Endothelial cell of umbilical vein (primary cell): ENCODE measurements at regions of chr1 and their contacts with region 1.

Region 1: DNA sequence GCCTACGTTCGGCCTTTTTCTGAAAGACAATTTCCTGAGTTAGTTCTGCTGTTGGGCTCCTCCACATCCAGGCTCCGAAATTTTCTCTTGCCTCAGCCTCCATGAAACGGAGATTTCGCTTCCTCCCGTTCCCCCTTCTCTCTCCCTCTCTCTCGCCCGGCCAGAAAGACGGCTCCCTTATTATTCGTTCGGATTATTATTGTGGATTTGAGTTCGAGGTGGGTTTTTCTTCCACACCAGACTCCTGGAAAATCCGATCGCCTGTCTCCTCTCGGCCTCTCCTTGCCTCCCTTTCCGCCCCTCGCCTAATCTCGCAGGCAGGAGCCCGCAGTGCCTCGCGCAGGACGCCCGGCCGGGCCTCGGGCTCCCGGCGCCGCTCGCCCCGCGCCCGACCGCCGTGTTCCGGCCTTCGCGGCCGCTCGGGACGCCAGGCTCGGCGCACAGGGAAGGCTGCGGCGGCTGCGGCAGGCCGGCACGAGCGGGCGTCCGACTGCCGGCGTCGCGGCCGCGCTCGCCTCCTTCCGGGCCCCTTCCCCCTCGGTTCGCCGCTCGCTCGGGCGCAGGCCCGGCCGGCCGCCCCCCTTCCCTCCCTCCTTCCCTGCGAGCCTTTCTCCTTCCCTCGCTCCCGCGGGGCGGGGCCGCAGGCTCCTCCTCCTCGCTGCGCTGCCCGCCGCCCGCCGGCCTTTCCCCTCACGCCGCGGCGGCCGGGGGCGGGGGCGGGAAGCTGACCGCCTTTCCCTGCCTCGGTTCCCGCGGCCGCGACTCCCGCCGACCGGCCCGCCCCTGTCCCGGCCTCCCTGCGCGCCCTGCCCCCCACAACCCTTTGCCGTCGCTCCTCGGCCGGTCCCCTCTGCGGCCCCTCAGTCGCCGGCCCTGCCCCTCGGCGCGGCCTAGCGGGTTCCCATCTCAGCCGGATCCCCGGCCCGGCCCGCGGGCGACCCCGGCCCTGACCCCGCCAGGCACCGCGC is at the start of gene ARHGEF11:
- DNase-seq: peak; percentile 89
- H3K4me3 ChIP-seq: peak within 1 kb of the TSS; percentile 59 to 99 (median 86)
- H3K27ac ChIP-seq: peak within 1 kb of the TSS; percentile 90
- H3K4me1 ChIP-seq: peaks cover 32% of the 10 kb centered on the region
- H3K27me3 ChIP-seq: peaks cover 7 to 9% of the 10 kb centered on the region in 2 experiments
- CTCF ChIP-seq: no peak
- POLR2A ChIP-seq: peak; percentile 90
- total RNA-seq, gene ARHGEF11: 27.2 and 28.0 TPM in 2 replicates

Region 2: DNA sequence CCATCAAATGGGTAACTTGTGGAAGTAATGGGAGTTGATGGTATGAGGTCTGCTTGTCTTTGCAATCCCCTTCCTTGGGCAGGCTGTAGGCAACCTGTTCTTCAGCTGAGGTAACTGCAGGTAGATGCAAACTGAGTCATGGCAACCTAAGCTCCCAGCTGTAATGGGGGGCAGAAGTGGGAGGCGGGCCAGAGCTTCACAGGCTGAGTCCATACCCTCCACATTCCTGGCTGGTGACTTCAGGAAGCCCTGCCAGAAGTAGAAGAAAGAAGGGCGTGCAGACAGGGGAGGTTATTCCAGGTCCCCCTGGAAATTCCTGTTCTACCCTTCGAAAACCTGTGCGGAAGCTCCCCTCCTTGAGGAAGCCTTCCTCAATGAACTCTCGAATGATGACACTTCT is 44.8 kb before region 1 on chr1:
- CTCF ChIA-PET with region 1: no interaction called
- POLR2A ChIA-PET with region 1: no interaction called
- dilution Hi-C with region 1: no loop called
- intact Hi-C with region 1: loop called (anchors 5 kb)
- DNase-seq: peak; percentile 6
- H3K4me3 ChIP-seq: no peak overlapping the region
- H3K27ac ChIP-seq: no peak overlapping the region
- H3K4me1 ChIP-seq: peaks cover 20% of the 10 kb centered on the region
- H3K27me3 ChIP-seq: no peaks in the 10 kb centered on the region
- CTCF ChIP-seq: no peak
- POLR2A ChIP-seq: no peak